ENCODE measurements at regions of chr5 and their contacts with region 1.

Region 1: GRCh38 chr5:119435436-119436132 is 16.7 kb upstream of the HSD17B4 start:
- DNase-seq: peak in 1 of 2 experiments; percentile 87
- H3K4me3 ChIP-seq: no peak overlapping the region
- H3K27ac ChIP-seq: no peak overlapping the region
- H3K4me1 ChIP-seq: 0 out of 7 replicates have a peak, but pooled peaks cover 0 to 2% (median 0%) of the 10 kb centered on the region in 4 experiments
- H3K27me3 ChIP-seq: no peaks in the 10 kb centered on the region
- CTCF ChIP-seq: peak; percentile 64 to 72 (median 65)
- EP300 ChIP-seq: no peak
- POLR2A ChIP-seq: no peak
- RAD21 ChIP-seq: peak; percentile 71 to 76

Region 2: DNA sequence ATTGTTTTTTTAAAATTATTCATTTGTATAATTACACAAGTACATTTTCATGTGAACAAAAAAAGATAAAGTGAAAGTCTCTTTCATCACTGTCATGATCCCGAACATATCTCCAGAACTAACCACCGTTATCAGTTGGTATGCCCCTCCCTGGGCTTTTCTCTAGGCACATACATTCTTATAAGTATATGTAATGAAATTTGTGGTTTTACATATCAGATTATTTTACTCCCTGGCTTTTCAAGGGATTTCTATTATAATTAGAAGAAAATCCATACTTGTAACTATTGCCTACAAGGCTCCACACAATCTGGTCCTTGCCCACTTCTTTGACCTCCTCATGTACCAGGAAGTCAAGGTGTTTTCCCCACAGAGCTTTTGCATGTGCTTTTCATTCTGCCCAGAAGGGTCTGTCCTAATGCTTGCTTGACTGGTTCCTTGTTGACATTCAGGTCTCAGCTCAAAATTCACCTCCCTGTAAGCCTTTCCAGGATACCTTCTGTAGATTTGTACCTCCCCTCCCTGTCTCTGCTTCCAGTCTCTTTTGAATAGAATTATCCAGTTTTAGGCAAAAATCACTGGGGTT is 17.0 kb before region 1 on chr5:
- CTCF ChIA-PET with region 1: interaction called, 13 read pairs
- POLR2A ChIA-PET with region 1: no interaction called
- DNase-seq: no peak
- H3K4me3 ChIP-seq: no peak overlapping the region
- H3K27ac ChIP-seq: no peak overlapping the region
- H3K4me1 ChIP-seq: peaks cover 0 to 3% (median 1%) of the 10 kb centered on the region in 4 experiments; a peak in 2 of 7 replicates
- H3K27me3 ChIP-seq: no peaks in the 10 kb centered on the region
- CTCF ChIP-seq: no peak
- EP300 ChIP-seq: no peak
- POLR2A ChIP-seq: no peak
- RAD21 ChIP-seq: no peak